A549 (cell line): ENCODE measurements at regions of chr20 and their contacts with region 1.

Region 1: GRCh38 chr20:401682-402495 is 6.2 kb upstream of the RBCK1 start:
- DNase-seq: peak; percentile 99 to 100
- ATAC-seq: peak; percentile 85 to 90
- H3K4me3 ChIP-seq: 0 out of 3 replicates have a peak overlapping the region, but pooled peaks have one; percentile 4
- H3K27ac ChIP-seq: peak overlapping the region; percentile 93 to 99
- H3K4me1 ChIP-seq: peaks cover 42% of the 10 kb centered on the region
- CTCF ChIP-seq: no peak
- EP300 ChIP-seq: peak; percentile 97 to 98; a peak in 4 of 5 replicates
- POLR2A ChIP-seq: no peak
- RAD21 ChIP-seq: peak in 1 of 2 experiments; percentile 9; a peak in 1 of 5 replicates

Region 2: GRCh38 chr20:381581-382290 is 20.2 kb before region 1 on chr20:
- CTCF ChIA-PET with region 1: interaction called, 160 read pairs
- POLR2A ChIA-PET with region 1: interaction called, 106 read pairs
- DNase-seq: peak; percentile 64 to 91
- ATAC-seq: peak; percentile 68 to 72
- H3K4me3 ChIP-seq: peak overlapping the region; percentile 93
- H3K27ac ChIP-seq: peak overlapping the region; percentile 94 to 98
- H3K4me1 ChIP-seq: peaks cover 65% of the 10 kb centered on the region
- CTCF ChIP-seq: no peak
- EP300 ChIP-seq: peak; percentile 33 to 40; a peak in 2 of 5 replicates
- POLR2A ChIP-seq: peak; percentile 41; the same call in 1 of the 2 replicates
- RAD21 ChIP-seq: peak in 1 of 2 experiments; percentile 43; a peak in 2 of 5 replicates